ENCODE measurements at regions of chr1 and their contacts with region 1.

Region 1: GRCh38 chr1:111148376-111148881 is 8.4 kb downstream of the CEPT1 start:
- DNase-seq: no peak
- H3K4me3 ChIP-seq: no peak overlapping the region
- H3K27ac ChIP-seq: no peak overlapping the region
- H3K4me1 ChIP-seq: no peaks in the 10 kb centered on the region
- H3K27me3 ChIP-seq: no peaks in the 10 kb centered on the region
- CTCF ChIP-seq: no peak

Region 2: GRCh38 chr1:111176678-111177077 is 28.2 kb after region 1 on chr1:
- CTCF ChIA-PET with region 1: no interaction called
- POLR2A ChIA-PET with region 1: interaction called, 10 read pairs
- intact Hi-C with region 1: no loop called
- DNase-seq: no peak
- H3K4me3 ChIP-seq: no peak overlapping the region
- H3K27ac ChIP-seq: no peak overlapping the region
- H3K4me1 ChIP-seq: peaks cover 16% of the 10 kb centered on the region
- H3K27me3 ChIP-seq: no peaks in the 10 kb centered on the region
- CTCF ChIP-seq: no peak

Region 3: DNA sequence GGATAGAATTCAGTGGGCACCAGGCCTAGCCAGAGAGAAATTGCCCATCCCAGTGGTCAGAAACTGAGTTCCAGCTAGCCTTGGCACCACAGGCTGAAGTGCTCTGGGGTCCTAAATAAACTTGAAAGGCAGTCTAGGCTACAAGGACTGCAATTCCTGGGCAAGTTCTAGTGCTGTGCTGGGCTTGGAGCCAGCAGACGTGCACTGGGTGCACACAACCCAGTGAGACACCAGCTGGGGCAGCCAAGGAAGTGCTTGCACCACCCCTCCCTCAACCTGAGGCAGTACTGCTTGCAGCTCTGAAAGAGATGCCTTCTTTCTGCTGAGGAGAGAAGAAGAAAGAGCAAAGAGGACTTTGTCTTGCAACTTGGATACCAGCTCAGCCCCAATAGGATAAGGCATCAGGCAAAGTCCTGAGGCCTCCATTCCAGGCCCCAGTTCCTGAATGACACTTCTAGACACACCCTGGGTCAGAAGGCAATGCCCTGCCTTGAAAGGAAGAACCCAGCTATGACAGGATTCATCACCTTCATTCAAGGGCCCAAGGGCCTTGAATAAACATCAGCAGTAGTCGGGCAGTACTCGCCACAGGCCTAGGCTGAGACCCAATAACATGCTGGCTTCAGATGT is 224.0 kb after region 1 on chr1:
- CTCF ChIA-PET with region 1: no interaction called
- POLR2A ChIA-PET with region 1: no interaction called
- intact Hi-C with region 1: no loop called
- DNase-seq: no peak
- H3K4me3 ChIP-seq: no peak overlapping the region
- H3K27ac ChIP-seq: no peak overlapping the region
- H3K4me1 ChIP-seq: no peaks in the 10 kb centered on the region
- H3K27me3 ChIP-seq: peaks cover 27% of the 10 kb centered on the region
- CTCF ChIP-seq: no peak

Region 4: GRCh38 chr1:111666841-111667270 is 518.4 kb after region 1 on chr1:
- CTCF ChIA-PET with region 1: no interaction called
- POLR2A ChIA-PET with region 1: no interaction called
- intact Hi-C with region 1: no loop called
- DNase-seq: peak; percentile 15
- H3K4me3 ChIP-seq: no peak overlapping the region
- H3K27ac ChIP-seq: no peak overlapping the region
- H3K4me1 ChIP-seq: no peaks in the 10 kb centered on the region
- H3K27me3 ChIP-seq: no peaks in the 10 kb centered on the region
- CTCF ChIP-seq: no peak

Measured in A673 (cell line).